Psoas muscle (tissue), 8 donors: ENCODE measurements at regions of chr20 and their contacts with region 1.

Region 1: GRCh38 chr20:52895701-52896100 is 76.5 kb upstream of the TSHZ2 start:
- DNase-seq: no peak
- ATAC-seq: no peak
- H3K4me3 ChIP-seq: no peak overlapping the region
- H3K27ac ChIP-seq: no peak overlapping the region
- H3K4me1 ChIP-seq: no peaks in the 10 kb centered on the region
- H3K27me3 ChIP-seq: no peaks in the 10 kb centered on the region
- CTCF ChIP-seq: no peak

Region 2: GRCh38 chr20:52601295-52601971 is 294.3 kb before region 1 on chr20:
- intact Hi-C with region 1: loop called in 1 of 2 experiments (anchors 10 kb)
- DNase-seq: no peak
- ATAC-seq: peak in 1 of 4 donors; percentile 47
- H3K4me3 ChIP-seq: no peak overlapping the region
- H3K27ac ChIP-seq: no peak overlapping the region
- H3K4me1 ChIP-seq: no peaks in the 10 kb centered on the region
- H3K27me3 ChIP-seq: peaks cover 0 to 2% (median 0%) of the 10 kb centered on the region in 3 donors
- CTCF ChIP-seq: no peak